H1 (cell line): ENCODE measurements at regions of chr6 and their contacts with region 1.

Region 1: DNA sequence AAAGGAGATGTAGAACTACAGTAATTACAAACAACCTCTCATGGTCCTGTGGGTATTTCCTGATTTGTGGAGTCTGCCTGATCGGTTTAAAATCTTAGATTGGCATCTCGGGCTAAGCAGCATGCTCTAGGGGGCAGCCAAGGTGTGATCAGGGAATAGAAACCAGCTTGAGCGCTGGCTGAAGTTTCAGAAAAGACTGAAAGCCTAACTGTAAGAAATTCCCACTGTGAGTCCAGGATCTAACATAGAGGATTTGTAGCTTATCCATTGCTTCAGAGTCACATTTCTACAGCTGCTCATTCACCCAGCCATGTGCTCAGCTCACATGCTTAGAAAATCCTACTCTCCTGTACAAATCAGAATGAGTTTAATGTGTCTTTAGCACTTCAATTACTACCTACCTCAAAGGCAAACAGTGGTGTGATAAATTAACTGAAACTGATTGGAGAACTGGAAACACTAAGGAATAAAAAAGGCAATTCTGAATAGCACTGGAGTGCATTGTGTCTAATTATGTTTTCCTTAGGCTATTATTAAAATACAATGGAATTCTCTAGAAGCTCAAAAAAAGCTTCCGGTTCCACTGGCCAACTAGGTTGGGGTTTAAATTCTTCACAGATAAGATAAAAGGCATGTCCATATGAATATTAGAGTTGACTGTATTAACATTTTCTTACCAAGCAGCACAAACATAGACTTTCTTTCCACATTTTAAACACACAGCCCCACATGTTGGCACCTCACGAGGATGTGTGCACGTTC is 73.8 kb upstream of the MPC1 start:
- DNase-seq: no peak
- H3K4me3 ChIP-seq: no peak overlapping the region
- H3K27ac ChIP-seq: no peak overlapping the region
- H3K4me1 ChIP-seq: peaks cover 0 to 3% (median 1%) of the 10 kb centered on the region in 4 experiments; a peak in 1 of 7 replicates
- H3K27me3 ChIP-seq: no peaks in the 10 kb centered on the region
- CTCF ChIP-seq: peak; percentile 27 to 74 (median 54)
- EP300 ChIP-seq: no peak
- POLR2A ChIP-seq: no peak
- RAD21 ChIP-seq: peak; percentile 72 to 76

Region 2: DNA sequence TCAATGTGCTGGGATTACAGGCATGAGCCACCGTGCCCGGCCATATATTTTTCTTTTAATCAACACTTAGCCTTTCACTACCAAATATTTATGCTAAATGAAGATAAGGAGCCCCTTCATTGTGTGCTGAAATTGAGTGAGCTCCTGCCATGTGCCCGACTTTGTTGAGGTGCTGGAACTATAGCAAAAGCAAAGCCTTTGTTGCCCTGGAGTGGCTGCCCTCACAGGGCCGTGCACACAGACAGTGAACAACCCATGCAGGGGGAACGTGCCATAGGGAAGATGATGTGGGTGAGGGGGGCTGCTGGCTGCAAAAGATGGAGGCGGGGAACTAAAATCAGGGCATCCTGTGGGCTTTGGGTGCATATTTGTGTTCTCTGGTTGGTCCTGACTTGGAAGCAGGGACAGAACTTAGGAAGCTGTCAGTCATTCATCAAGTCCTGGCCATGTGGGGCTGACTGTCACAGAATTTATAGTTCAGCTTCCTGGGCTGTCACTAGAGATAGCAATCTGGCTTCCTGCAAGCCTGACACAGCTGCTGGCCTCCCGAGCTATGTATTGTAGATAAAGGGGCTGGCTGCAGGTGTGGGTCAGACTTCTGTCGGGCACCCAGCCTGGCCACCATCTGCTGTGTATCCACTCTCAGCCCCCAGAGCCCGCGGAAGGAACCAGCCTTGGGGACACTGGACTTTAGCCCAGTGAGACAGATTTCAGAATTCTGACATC is 17.0 kb before region 1 on chr6:
- CTCF ChIA-PET with region 1: interaction called, 19 read pairs
- POLR2A ChIA-PET with region 1: interaction called, 5 read pairs
- DNase-seq: no peak
- H3K4me3 ChIP-seq: no peak overlapping the region
- H3K27ac ChIP-seq: no peak overlapping the region
- H3K4me1 ChIP-seq: no peaks in the 10 kb centered on the region
- H3K27me3 ChIP-seq: no peaks in the 10 kb centered on the region
- CTCF ChIP-seq: no peak
- EP300 ChIP-seq: no peak
- POLR2A ChIP-seq: no peak
- RAD21 ChIP-seq: no peak